ENCODE measurements at regions of chr12 and their contacts with region 1.

Region 1: GRCh38 chr12:129911428-129912049 is 7.7 kb upstream of the TMEM132D start:
- DNase-seq: peak in 1 of 2 experiments; percentile 77
- H3K4me3 ChIP-seq: no peak overlapping the region
- H3K27ac ChIP-seq: no peak overlapping the region
- H3K4me1 ChIP-seq: 0 out of 7 replicates have a peak, but pooled peaks cover 0 to 3% (median 0%) of the 10 kb centered on the region in 4 experiments
- H3K27me3 ChIP-seq: peaks cover 0 to 6% (median 6%) of the 10 kb centered on the region in 4 experiments; a peak in 5 of 7 replicates
- CTCF ChIP-seq: peak; percentile 92 to 94 (median 92)
- EP300 ChIP-seq: no peak
- POLR2A ChIP-seq: no peak
- RAD21 ChIP-seq: peak; percentile 100

Region 2: GRCh38 chr12:129193263-129193871 is 718.2 kb before region 1 on chr12:
- CTCF ChIA-PET with region 1: interaction called, 12 read pairs
- POLR2A ChIA-PET with region 1: no interaction called
- DNase-seq: peak; percentile 44 to 85
- H3K4me3 ChIP-seq: no peak overlapping the region
- H3K27ac ChIP-seq: no peak overlapping the region
- H3K4me1 ChIP-seq: no peaks in the 10 kb centered on the region
- H3K27me3 ChIP-seq: no peaks in the 10 kb centered on the region
- CTCF ChIP-seq: peak; percentile 54 to 82 (median 73)
- EP300 ChIP-seq: no peak
- POLR2A ChIP-seq: no peak
- RAD21 ChIP-seq: peak; percentile 73 to 74

Region 3: DNA sequence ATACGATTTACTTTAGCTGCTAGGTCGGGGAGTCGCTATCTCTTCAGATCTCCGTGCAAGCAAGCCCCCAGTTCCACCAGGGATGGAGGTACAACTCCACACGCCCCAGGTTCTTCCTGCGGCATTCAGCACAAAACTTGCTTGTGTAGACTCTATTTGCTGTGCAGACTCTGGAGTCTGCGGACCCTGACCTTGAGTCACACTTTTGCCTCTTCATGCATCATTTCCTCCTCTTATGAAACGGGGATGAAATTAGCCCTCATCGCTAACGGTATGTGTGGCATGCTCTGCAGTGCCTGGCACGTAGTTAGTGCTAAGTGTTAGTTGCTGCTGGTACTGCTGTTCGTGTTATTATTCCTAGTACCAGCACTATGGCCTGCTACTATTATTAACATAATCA is 92.1 kb before region 1 on chr12:
- CTCF ChIA-PET with region 1: no interaction called
- POLR2A ChIA-PET with region 1: no interaction called
- DNase-seq: no peak
- H3K4me3 ChIP-seq: no peak overlapping the region
- H3K27ac ChIP-seq: no peak overlapping the region
- H3K4me1 ChIP-seq: no peaks in the 10 kb centered on the region
- H3K27me3 ChIP-seq: no peaks in the 10 kb centered on the region
- CTCF ChIP-seq: no peak
- EP300 ChIP-seq: no peak
- POLR2A ChIP-seq: no peak
- RAD21 ChIP-seq: no peak

Region 4: GRCh38 chr12:129984106-129984505 is 72.6 kb after region 1 on chr12:
- CTCF ChIA-PET with region 1: interaction called, 22 read pairs
- POLR2A ChIA-PET with region 1: no interaction called
- DNase-seq: no peak
- H3K4me3 ChIP-seq: no peak overlapping the region
- H3K27ac ChIP-seq: no peak overlapping the region
- H3K4me1 ChIP-seq: no peaks in the 10 kb centered on the region; a peak in 1 of 7 replicates
- H3K27me3 ChIP-seq: peaks cover 0 to 2% (median 0%) of the 10 kb centered on the region in 4 experiments; a peak in 1 of 7 replicates
- CTCF ChIP-seq: no peak
- EP300 ChIP-seq: no peak
- POLR2A ChIP-seq: no peak
- RAD21 ChIP-seq: no peak

Region 5: GRCh38 chr12:130086248-130086647 is 174.7 kb after region 1 on chr12:
- CTCF ChIA-PET with region 1: no interaction called
- POLR2A ChIA-PET with region 1: no interaction called
- DNase-seq: no peak
- H3K4me3 ChIP-seq: no peak overlapping the region
- H3K27ac ChIP-seq: no peak overlapping the region
- H3K4me1 ChIP-seq: peaks cover 3 to 14% (median 4%) of the 10 kb centered on the region in 4 experiments; a peak in 6 of 7 replicates
- H3K27me3 ChIP-seq: peaks cover 0 to 6% (median 4%) of the 10 kb centered on the region in 4 experiments; a peak in 4 of 7 replicates
- CTCF ChIP-seq: no peak
- EP300 ChIP-seq: no peak
- POLR2A ChIP-seq: no peak
- RAD21 ChIP-seq: no peak